ENCODE measurements at regions of chr12 and their contacts with region 1.

Region 1: DNA sequence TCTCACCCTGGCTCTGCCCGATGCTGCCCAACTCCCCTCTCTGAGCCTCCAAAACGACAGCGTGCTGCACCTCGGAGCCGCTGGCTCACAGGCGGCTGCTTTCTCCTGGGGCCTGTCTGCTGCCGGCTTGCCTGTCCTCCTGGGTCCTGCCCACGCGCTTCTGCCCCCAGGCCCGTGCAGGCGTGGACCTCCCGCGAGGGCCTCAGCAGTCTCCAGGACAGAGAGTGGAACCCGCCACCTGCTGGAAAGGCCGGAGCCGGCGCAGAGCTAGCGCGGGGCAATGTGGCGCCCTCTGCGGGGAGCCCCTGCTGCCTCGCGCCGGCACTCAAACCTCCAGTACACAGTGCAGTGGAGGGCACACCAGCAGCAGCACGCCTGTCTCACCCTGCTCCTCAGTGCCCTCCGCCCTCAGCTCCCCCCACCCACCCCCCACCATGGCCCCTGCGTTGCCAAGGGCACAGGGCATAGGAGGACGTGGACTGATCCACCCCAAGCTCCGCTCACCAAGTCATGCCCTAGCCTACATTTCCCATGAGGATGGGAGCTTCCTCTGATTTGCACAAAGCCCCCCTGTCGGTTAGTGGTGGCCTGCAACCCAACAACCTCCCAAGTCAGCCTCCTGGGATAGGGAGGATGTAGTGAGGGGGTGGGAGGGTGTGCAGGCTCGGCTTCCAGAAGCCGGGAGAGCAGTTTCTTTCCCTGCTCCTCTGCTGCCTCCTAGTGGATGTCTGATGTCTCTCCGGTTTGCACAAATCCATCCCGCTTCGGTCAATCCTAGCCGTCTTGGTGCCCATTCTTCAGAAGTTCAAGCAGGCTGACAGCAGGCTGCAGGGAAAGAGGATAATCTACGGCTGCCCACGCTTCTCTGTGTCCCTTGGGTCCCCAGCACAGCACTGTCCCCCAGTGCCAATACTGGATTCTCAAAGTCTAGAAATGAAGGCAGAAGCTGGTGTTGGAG is 25.2 kb downstream of the KRT8 start:
- DNase-seq: no peak
- ATAC-seq: peak; percentile 98
- H3K4me3 ChIP-seq: no peak overlapping the region
- H3K27ac ChIP-seq: no peak overlapping the region
- H3K4me1 ChIP-seq: no peaks in the 10 kb centered on the region
- H3K27me3 ChIP-seq: no peaks in the 10 kb centered on the region; a peak in 2 of 4 replicates
- CTCF ChIP-seq: peak; percentile 73 to 89 (median 84)
- EP300 ChIP-seq: no peak
- POLR2A ChIP-seq: no peak
- RAD21 ChIP-seq: peak; percentile 67

Region 2: GRCh38 chr12:52156736-52157565 is 722.7 kb before region 1 on chr12:
- CTCF ChIA-PET with region 1: interaction called, 7 read pairs
- POLR2A ChIA-PET with region 1: no interaction called
- RAD21 ChIA-PET with region 1: interaction called, 3 read pairs
- SMC1A ChIA-PET with region 1: no interaction called
- in situ Hi-C with region 1: no loop called
- intact Hi-C with region 1: loop called (anchors 5 kb)
- DNase-seq: no peak
- ATAC-seq: peak; percentile 90
- H3K4me3 ChIP-seq: no peak overlapping the region
- H3K27ac ChIP-seq: no peak overlapping the region
- H3K4me1 ChIP-seq: no peaks in the 10 kb centered on the region
- H3K27me3 ChIP-seq: no peaks in the 10 kb centered on the region
- CTCF ChIP-seq: peak; percentile 89 to 97 (median 96); a peak in 5 of 6 replicates
- EP300 ChIP-seq: no peak
- POLR2A ChIP-seq: no peak
- RAD21 ChIP-seq: peak; percentile 95

Region 3: GRCh38 chr12:52372216-52373154 is 507.2 kb before region 1 on chr12:
- CTCF ChIA-PET with region 1: interaction called, 30 read pairs
- POLR2A ChIA-PET with region 1: no interaction called
- RAD21 ChIA-PET with region 1: interaction called, 5 read pairs
- SMC1A ChIA-PET with region 1: interaction called, 5 read pairs
- in situ Hi-C with region 1: no loop called
- intact Hi-C with region 1: loop called (anchors 1 kb)
- DNase-seq: no peak
- ATAC-seq: peak; percentile 85
- H3K4me3 ChIP-seq: no peak overlapping the region
- H3K27ac ChIP-seq: no peak overlapping the region
- H3K4me1 ChIP-seq: no peaks in the 10 kb centered on the region
- H3K27me3 ChIP-seq: peaks cover 3 to 4% of the 10 kb centered on the region in 2 experiments; a peak in 2 of 4 replicates
- CTCF ChIP-seq: peak; percentile 71 to 83 (median 79)
- EP300 ChIP-seq: no peak
- POLR2A ChIP-seq: no peak
- RAD21 ChIP-seq: peak; percentile 82

Region 4: GRCh38 chr12:52380271-52380694 is 499.4 kb before region 1 on chr12:
- CTCF ChIA-PET with region 1: interaction called, 3 read pairs
- POLR2A ChIA-PET with region 1: no interaction called
- RAD21 ChIA-PET with region 1: no interaction called
- SMC1A ChIA-PET with region 1: no interaction called
- in situ Hi-C with region 1: loop called (anchors 5 kb)
- intact Hi-C with region 1: no loop called
- DNase-seq: no peak
- ATAC-seq: peak; percentile 43; the same call in 1 of the 3 replicates
- H3K4me3 ChIP-seq: no peak overlapping the region
- H3K27ac ChIP-seq: no peak overlapping the region
- H3K4me1 ChIP-seq: no peaks in the 10 kb centered on the region
- H3K27me3 ChIP-seq: peaks cover 2 to 3% of the 10 kb centered on the region in 2 experiments; a peak in 3 of 4 replicates
- CTCF ChIP-seq: peak; percentile 34 to 58 (median 40); a peak in 5 of 6 replicates
- EP300 ChIP-seq: no peak
- POLR2A ChIP-seq: no peak
- RAD21 ChIP-seq: no peak

Region 5: DNA sequence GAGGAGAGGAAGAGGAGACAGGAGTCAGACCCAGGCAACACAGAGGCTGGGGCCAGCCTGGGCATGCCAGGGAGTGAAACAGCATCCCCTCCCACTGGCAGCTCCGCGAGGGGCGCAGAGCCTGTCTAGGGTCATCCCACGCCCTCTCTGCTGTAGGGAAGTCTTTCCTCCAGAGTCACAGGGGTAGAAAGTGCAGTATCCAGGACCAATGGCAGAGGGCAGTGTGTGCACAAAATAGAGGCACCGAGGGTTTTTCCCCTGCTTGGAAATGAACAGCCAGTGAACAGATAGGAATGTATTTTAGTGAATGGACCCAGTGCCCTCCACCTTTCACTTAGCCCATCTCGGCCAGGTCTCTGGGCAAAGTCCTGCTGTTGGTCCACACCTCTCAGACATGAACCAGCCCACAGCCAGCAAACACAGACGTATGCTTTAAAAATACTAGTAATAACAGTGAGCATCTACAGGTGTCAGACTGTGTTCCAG is 296.7 kb before region 1 on chr12:
- CTCF ChIA-PET with region 1: interaction called, 36 read pairs
- POLR2A ChIA-PET with region 1: no interaction called
- RAD21 ChIA-PET with region 1: interaction called, 3 read pairs
- SMC1A ChIA-PET with region 1: interaction called, 3 read pairs
- in situ Hi-C with region 1: no loop called
- intact Hi-C with region 1: loop called (anchors 1 kb)
- DNase-seq: no peak
- ATAC-seq: peak; percentile 90
- H3K4me3 ChIP-seq: no peak overlapping the region
- H3K27ac ChIP-seq: no peak overlapping the region
- H3K4me1 ChIP-seq: no peaks in the 10 kb centered on the region
- H3K27me3 ChIP-seq: peaks cover 0 to 5% of the 10 kb centered on the region in 2 experiments; a peak in 3 of 4 replicates
- CTCF ChIP-seq: peak; percentile 59 to 82 (median 66); a peak in 5 of 6 replicates
- EP300 ChIP-seq: no peak
- POLR2A ChIP-seq: no peak
- RAD21 ChIP-seq: peak; percentile 65